HEK293 (cell line): ENCODE measurements at regions of chr1 and their contacts with region 1.

Region 1: GRCh38 chr1:92994105-92994712 is 32.9 kb upstream of the DIPK1A start:
- H3K4me3 ChIP-seq: no peak overlapping the region
- H3K27ac ChIP-seq: no peak overlapping the region
- H3K4me1 ChIP-seq: no peaks in the 10 kb centered on the region
- CTCF ChIP-seq: 0 out of 2 replicates have a peak, but pooled peaks have one; percentile 53

Region 2: GRCh38 chr1:92858564-92859399 is 135.4 kb before region 1 on chr1:
- CTCF ChIA-PET with region 1: interaction called, 216 read pairs
- POLR2A ChIA-PET with region 1: no interaction called
- H3K4me3 ChIP-seq: no peak overlapping the region
- H3K27ac ChIP-seq: no peak overlapping the region
- H3K4me1 ChIP-seq: no peaks in the 10 kb centered on the region
- CTCF ChIP-seq: peak; percentile 90

Region 3: GRCh38 chr1:92882819-92883218 is 111.4 kb before region 1 on chr1:
- CTCF ChIA-PET with region 1: interaction called, 23 read pairs
- POLR2A ChIA-PET with region 1: no interaction called
- H3K4me3 ChIP-seq: no peak overlapping the region
- H3K27ac ChIP-seq: no peak overlapping the region
- H3K4me1 ChIP-seq: 0 out of 2 replicates have a peak, but pooled peaks cover 4% of the 10 kb centered on the region
- CTCF ChIP-seq: no peak

Region 4: DNA sequence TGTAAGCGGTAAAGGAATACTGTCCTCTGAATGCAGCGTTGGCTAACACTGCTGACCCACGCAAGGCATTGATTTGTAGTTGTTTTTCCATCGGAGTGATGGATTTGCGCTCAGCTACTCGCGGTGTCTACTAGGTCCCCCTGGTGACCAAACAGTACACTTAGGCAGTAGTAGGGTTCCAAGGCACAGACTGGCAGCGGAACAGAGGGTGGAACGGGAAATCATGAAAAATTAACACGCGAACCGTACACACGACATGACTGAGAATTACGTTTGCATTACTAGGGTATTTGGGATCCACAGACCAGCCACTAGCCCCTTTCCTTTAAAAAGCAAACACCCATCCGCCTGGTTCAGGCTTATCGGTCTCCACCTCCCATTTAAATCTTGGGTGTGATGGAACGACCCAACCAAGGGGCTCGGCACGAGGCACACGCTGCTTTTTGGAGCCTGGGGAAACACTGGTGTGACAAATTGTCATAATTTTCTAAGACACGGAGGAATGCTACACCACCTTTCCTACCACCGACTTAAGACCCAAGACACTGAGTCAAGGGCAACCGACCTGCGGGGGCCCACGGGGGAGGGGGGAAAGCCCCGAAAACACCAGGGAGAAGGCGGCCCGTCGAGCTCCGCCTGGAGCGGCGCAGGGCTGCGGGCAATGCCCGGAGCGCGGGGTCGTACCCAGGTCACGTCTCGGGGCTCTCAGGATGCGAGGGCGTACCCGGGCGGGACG is 33.6 kb before region 1 on chr1:
- CTCF ChIA-PET with region 1: interaction called, 50 read pairs
- POLR2A ChIA-PET with region 1: interaction called, 4 read pairs
- H3K4me3 ChIP-seq: peak overlapping the region; percentile 77
- H3K27ac ChIP-seq: peak overlapping the region; percentile 74; the same call in 1 of the 2 replicates
- H3K4me1 ChIP-seq: peaks cover 5% of the 10 kb centered on the region; the same call in 1 of the 2 replicates
- CTCF ChIP-seq: peak; percentile 85; the same call in 1 of the 2 replicates

Region 5: GRCh38 chr1:92980732-92981647 is 13.2 kb before region 1 on chr1:
- CTCF ChIA-PET with region 1: interaction called, 19 read pairs
- POLR2A ChIA-PET with region 1: no interaction called
- H3K4me3 ChIP-seq: no peak overlapping the region
- H3K27ac ChIP-seq: no peak overlapping the region
- H3K4me1 ChIP-seq: no peaks in the 10 kb centered on the region
- CTCF ChIP-seq: no peak

Region 6: GRCh38 chr1:93056214-93056613 is 62.0 kb after region 1 on chr1:
- CTCF ChIA-PET with region 1: interaction called, 17 read pairs
- POLR2A ChIA-PET with region 1: no interaction called
- H3K4me3 ChIP-seq: no peak overlapping the region
- H3K27ac ChIP-seq: no peak overlapping the region
- H3K4me1 ChIP-seq: no peaks in the 10 kb centered on the region
- CTCF ChIP-seq: no peak